ENCODE measurements at regions of chr1 and their contacts with region 1.

Region 1: DNA sequence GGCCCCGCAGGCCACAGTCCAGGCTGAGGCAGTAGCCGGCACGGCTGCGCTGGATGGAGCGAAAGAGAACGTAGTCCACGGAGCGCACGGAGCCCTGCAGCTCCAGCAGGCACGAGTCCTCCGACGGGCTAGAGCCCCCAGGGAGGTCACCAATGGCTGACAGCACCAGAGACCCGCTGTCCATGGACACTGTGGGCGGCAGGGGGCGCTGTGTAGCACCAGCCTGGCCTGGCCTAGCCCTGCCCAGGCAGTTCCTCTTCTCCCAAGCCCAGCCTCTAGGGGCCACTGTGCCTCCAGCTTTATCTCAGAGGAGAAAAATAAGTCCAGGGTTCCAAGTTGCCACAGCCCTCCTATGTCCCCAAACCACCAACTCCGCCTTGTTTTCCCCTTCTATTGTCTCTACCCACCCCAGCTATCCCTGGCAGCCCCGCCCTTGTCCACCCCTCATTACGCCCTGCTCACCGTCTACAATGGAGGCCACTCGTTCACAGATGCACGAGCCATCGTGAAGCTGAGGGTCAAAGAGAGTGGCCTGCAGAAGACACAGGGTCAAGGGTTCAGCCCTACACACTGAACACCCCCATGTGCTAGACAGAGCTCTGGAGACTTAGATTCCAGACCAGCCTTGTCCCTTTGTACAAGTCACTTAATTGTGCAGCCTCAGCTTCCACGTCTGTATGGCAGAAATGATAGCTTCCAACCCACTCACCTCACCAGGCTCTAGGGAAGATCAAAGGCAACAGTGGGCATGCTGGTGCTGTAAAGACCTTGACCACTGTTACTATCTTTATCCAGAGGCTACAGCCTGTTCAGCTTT is 4.4 kb downstream of the ENTREP3 start:
- DNase-seq: peak; percentile 88 to 97 (median 95)
- H3K4me3 ChIP-seq: peak overlapping the region; percentile 54
- H3K4me3 Mint-ChIP-seq: peak overlapping the region; percentile 17 to 84 (median 59)
- H3K27ac ChIP-seq: no peak overlapping the region
- H3K27ac Mint-ChIP-seq: peak overlapping the region in 4 of 8 donors; percentile 13 to 83 (median 40)
- H3K4me1 ChIP-seq: peaks cover 5% of the 10 kb centered on the region
- H3K4me1 Mint-ChIP-seq: peaks cover 20 to 32% (median 24%) of the 10 kb centered on the region in 3 donors
- H3K27me3 ChIP-seq: no peaks in the 10 kb centered on the region
- H3K27me3 Mint-ChIP-seq: no peaks in the 10 kb centered on the region

Region 2: GRCh38 chr1:155038602-155039307 is 212.1 kb before region 1 on chr1:
- CTCF ChIA-PET with region 1: no interaction called
- POLR2A ChIA-PET with region 1: no interaction called
- DNase-seq: no peak
- H3K4me3 ChIP-seq: no peak overlapping the region
- H3K4me3 Mint-ChIP-seq: no peak overlapping the region
- H3K27ac ChIP-seq: no peak overlapping the region
- H3K27ac Mint-ChIP-seq: peak overlapping the region in 3 of 8 donors; percentile 9 to 70 (median 42)
- H3K4me1 ChIP-seq: no peaks in the 10 kb centered on the region
- H3K4me1 Mint-ChIP-seq: no peaks in the 10 kb centered on the region
- H3K27me3 ChIP-seq: no peaks in the 10 kb centered on the region
- H3K27me3 Mint-ChIP-seq: peaks cover 5 to 23% of the 10 kb centered on the region in 2 donors

Region 3: DNA sequence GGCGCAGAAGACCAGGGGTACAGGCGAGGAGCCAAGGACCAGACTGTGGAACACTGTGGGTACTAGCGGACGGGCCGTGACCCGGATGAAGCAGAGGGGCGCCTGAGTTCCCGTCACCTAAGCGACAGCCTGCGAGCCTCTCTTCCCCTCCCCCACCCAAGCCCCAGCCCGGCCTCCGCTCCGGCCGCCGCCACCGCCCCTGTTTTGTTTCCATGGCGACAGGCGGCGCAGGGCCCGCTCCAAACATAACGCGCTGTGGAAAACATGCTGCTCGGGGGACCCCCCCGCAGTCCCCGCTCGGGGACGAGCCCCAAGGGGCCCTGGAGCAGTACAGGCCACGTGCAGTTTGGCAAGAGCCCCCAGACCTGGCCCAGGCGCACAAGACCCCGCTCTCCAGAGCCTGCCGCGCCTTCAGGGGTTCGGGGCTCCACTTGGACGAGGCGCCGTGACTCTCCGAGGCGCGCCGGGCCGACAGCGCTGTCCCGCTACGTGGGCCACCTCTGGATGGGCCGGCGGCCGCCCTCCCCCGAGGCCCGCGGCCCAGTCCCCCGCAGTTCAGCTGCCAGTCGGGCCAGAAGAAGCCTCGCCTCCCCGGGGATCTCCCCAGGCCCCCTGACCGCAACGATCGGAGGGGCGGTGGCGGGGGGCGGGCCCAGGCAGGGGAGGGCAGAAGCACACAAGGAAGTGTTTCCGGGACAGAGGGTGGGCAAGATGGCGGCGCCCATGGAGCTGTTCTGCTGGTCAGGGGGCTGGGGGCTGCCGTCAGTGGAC is 42.1 kb before region 1 on chr1 and contains the start of gene MTX1:
- CTCF ChIA-PET with region 1: interaction called, 20 read pairs
- POLR2A ChIA-PET with region 1: no interaction called
- DNase-seq: peak; percentile 87 to 96 (median 92)
- H3K4me3 ChIP-seq: peak within 1 kb of the TSS; percentile 100
- H3K4me3 Mint-ChIP-seq: peak within 1 kb of the TSS; percentile 82 to 93 (median 89)
- H3K27ac ChIP-seq: peak within 1 kb of the TSS; percentile 99
- H3K27ac Mint-ChIP-seq: peak within 1 kb of the TSS; percentile 92 to 99 (median 96)
- H3K4me1 ChIP-seq: peaks cover 23% of the 10 kb centered on the region
- H3K4me1 Mint-ChIP-seq: peaks cover 18 to 28% (median 26%) of the 10 kb centered on the region in 3 donors
- H3K27me3 ChIP-seq: no peaks in the 10 kb centered on the region
- H3K27me3 Mint-ChIP-seq: peaks cover 0 to 3% of the 10 kb centered on the region in 2 donors
- total RNA-seq, gene MTX1: 67.6 to 73.2 TPM

Region 4: DNA sequence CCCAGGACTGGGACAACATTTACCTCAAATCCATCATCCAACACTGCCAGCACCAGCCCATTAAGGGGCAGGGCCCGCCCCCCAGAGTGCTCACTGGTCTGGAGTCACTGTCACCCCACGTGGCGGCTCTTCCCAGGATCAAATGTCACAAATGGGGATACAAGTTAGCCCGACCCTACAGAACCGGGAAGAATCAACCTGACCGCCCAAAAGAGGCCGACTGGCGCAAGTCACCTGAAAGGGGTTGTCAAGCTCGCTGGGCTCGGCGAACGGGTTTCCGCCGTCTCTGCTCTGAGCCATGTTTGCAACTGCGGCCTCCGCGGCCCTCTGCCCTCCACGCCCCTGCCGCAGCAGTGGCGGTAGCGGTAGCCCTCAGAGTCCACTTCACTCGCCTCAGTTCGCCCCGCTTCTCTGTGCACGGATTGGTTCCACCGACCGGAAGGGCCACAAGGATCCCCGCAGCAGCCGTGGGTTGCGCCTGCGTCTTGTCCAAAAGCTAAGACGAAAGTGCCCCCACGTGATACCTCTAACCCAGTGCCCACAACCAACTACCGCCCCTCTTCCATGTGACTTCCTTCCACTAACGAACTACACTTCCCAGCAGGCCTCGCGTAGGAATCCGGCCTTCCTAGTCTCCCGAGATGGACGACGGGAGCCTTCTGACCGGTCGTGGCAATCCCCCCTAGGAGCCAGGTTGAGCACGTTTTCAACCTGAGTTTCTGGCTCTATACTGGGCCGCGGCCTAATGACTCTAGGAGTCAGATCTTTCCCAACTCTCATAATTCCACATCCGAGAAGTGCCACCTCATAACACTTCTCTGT is 11.2 kb after region 1 on chr1 and contains the start of gene SCAMP3:
- CTCF ChIA-PET with region 1: interaction called, 79 read pairs
- POLR2A ChIA-PET with region 1: interaction called, 16 read pairs
- DNase-seq: peak; percentile 82 to 91 (median 84)
- H3K4me3 ChIP-seq: peak within 1 kb of the TSS; percentile 99
- H3K4me3 Mint-ChIP-seq: peak within 1 kb of the TSS; percentile 95 to 100 (median 99)
- H3K27ac ChIP-seq: peak within 1 kb of the TSS; percentile 82
- H3K27ac Mint-ChIP-seq: peak within 1 kb of the TSS; percentile 80 to 99 (median 98)
- H3K4me1 ChIP-seq: peaks cover 22% of the 10 kb centered on the region
- H3K4me1 Mint-ChIP-seq: peaks cover 31 to 45% (median 36%) of the 10 kb centered on the region in 3 donors
- H3K27me3 ChIP-seq: no peaks in the 10 kb centered on the region
- H3K27me3 Mint-ChIP-seq: no peaks in the 10 kb centered on the region
- total RNA-seq, gene SCAMP3: 152 to 158 TPM

Region 5: GRCh38 chr1:155277070-155277895 is 26.4 kb after region 1 on chr1 and contains the start of gene HCN3:
- CTCF ChIA-PET with region 1: interaction called, 64 read pairs
- POLR2A ChIA-PET with region 1: interaction called, 6 read pairs
- DNase-seq: peak; percentile 82 to 94 (median 91)
- H3K4me3 ChIP-seq: peak within 1 kb of the TSS; percentile 59
- H3K4me3 Mint-ChIP-seq: peak within 1 kb of the TSS; percentile 68 to 89 (median 80)
- H3K27ac ChIP-seq: peak within 1 kb of the TSS; percentile 7
- H3K27ac Mint-ChIP-seq: peak within 1 kb of the TSS; percentile 56 to 87 (median 64)
- H3K4me1 ChIP-seq: peaks cover 33% of the 10 kb centered on the region
- H3K4me1 Mint-ChIP-seq: peaks cover 33 to 42% (median 37%) of the 10 kb centered on the region in 3 donors
- H3K27me3 ChIP-seq: no peaks in the 10 kb centered on the region
- H3K27me3 Mint-ChIP-seq: no peaks in the 10 kb centered on the region
- total RNA-seq, gene HCN3: 3.2 to 3.7 TPM

Region 6: GRCh38 chr1:155323798-155324610 is 73.2 kb after region 1 on chr1:
- CTCF ChIA-PET with region 1: interaction called, 116 read pairs
- POLR2A ChIA-PET with region 1: interaction called, 8 read pairs
- DNase-seq: peak; percentile 83 to 91 (median 87)
- H3K4me3 ChIP-seq: peak overlapping the region; percentile 97
- H3K4me3 Mint-ChIP-seq: peak overlapping the region; percentile 88 to 96 (median 89)
- H3K27ac ChIP-seq: peak overlapping the region; percentile 81
- H3K27ac Mint-ChIP-seq: peak overlapping the region in 7 of 8 donors; percentile 62 to 95 (median 89)
- H3K4me1 ChIP-seq: peaks cover 9% of the 10 kb centered on the region
- H3K4me1 Mint-ChIP-seq: peaks cover 22 to 41% (median 27%) of the 10 kb centered on the region in 3 donors
- H3K27me3 ChIP-seq: no peaks in the 10 kb centered on the region
- H3K27me3 Mint-ChIP-seq: peaks cover 0 to 2% of the 10 kb centered on the region in 2 donors

Region 7: DNA sequence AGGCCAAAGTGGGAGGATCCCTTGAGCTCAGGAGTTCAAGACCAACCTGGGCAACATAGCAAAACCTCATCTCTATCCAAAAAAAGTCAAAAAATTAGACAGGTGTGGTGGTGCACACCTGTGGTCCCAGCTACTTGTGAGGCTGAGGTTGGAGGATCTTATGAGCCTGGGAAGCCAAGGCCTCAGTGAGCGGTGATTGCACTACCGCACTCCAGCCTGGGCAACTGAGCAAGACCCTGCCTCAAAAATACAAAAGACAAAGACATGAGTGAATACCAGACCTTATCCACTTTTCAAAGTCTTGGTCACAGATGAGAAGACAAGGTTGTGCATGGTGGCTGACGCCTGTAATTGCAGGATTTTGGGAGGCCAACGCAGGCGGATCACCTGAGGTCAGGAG is 346.0 kb after region 1 on chr1:
- CTCF ChIA-PET with region 1: interaction called, 29 read pairs
- POLR2A ChIA-PET with region 1: no interaction called
- DNase-seq: no peak
- H3K4me3 ChIP-seq: no peak overlapping the region
- H3K4me3 Mint-ChIP-seq: no peak overlapping the region
- H3K27ac ChIP-seq: no peak overlapping the region
- H3K27ac Mint-ChIP-seq: no peak overlapping the region
- H3K4me1 ChIP-seq: no peaks in the 10 kb centered on the region
- H3K4me1 Mint-ChIP-seq: peaks cover 1 to 10% (median 9%) of the 10 kb centered on the region in 3 donors
- H3K27me3 ChIP-seq: no peaks in the 10 kb centered on the region
- H3K27me3 Mint-ChIP-seq: peaks cover 0 to 1% of the 10 kb centered on the region in 2 donors